Gastrocnemius medialis (tissue), 4 donors: ENCODE measurements at regions of chr4 and their contacts with region 1.

Region 1: GRCh38 chr4:184825896-184826690 is at the start of gene ACSL1:
- DNase-seq: peak; percentile 80 to 91
- ATAC-seq: peak; percentile 74 to 76
- H3K4me3 ChIP-seq: peak within 1 kb of the TSS; percentile 64 to 91 (median 73)
- H3K27ac ChIP-seq: peak within 1 kb of the TSS; percentile 97 to 100 (median 98)
- H3K4me1 ChIP-seq: peaks cover 36 to 42% of the 10 kb centered on the region in 2 donors
- H3K27me3 ChIP-seq: no peaks in the 10 kb centered on the region
- CTCF ChIP-seq: no peak
- POLR2A ChIP-seq: peak; percentile 99
- total RNA-seq, gene ACSL1: 591 to 2,181 (median 1,316) TPM

Region 2: DNA sequence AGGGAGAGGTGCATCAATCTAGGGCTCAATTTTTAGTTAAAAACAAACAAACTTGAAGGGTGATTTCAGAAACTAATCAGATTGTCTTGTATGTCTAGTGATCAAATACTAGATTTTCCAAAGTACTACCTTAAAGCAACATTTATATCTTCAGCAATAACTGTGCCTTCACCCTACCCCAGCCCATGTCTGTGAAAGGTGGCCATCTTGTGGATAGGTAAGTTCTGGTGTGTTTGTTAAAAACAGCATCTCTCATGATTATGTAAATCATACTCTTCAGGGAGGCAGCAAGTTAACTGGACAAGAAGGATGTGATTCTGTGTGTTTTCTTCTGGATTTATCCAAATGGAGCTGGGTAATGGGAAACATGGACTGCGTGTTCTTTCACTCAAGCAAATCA is 81.1 kb after region 1 on chr4:
- in situ Hi-C with region 1: no loop called
- intact Hi-C with region 1: loop called (anchors 5 kb)
- DNase-seq: no peak
- ATAC-seq: no peak
- H3K4me3 ChIP-seq: no peak overlapping the region
- H3K27ac ChIP-seq: no peak overlapping the region
- H3K4me1 ChIP-seq: no peaks in the 10 kb centered on the region
- H3K27me3 ChIP-seq: no peaks in the 10 kb centered on the region
- CTCF ChIP-seq: peak in 1 of 5 experiments; percentile 24
- POLR2A ChIP-seq: no peak

Region 3: GRCh38 chr4:185115827-185116232 is 289.7 kb after region 1 on chr4:
- in situ Hi-C with region 1: no loop called
- intact Hi-C with region 1: loop called (anchors 10 kb)
- DNase-seq: peak; percentile 45 to 52
- ATAC-seq: peak; percentile 23 to 56
- H3K4me3 ChIP-seq: no peak overlapping the region
- H3K27ac ChIP-seq: peak overlapping the region; percentile 34 to 73 (median 43)
- H3K4me1 ChIP-seq: peaks cover 30 to 34% of the 10 kb centered on the region in 2 donors
- H3K27me3 ChIP-seq: no peaks in the 10 kb centered on the region
- CTCF ChIP-seq: no peak
- POLR2A ChIP-seq: no peak